ENCODE measurements at regions of chr17 and their contacts with region 1.

Region 1: GRCh38 chr17:37392024-37392590 is 14.5 kb downstream of the ACACA start:
- DNase-seq: no peak
- H3K4me3 Mint-ChIP-seq: no peak overlapping the region
- H3K27ac Mint-ChIP-seq: peak overlapping the region; percentile 18
- H3K4me1 Mint-ChIP-seq: peaks cover 17% of the 10 kb centered on the region
- H3K27me3 Mint-ChIP-seq: no peaks in the 10 kb centered on the region

Region 2: DNA sequence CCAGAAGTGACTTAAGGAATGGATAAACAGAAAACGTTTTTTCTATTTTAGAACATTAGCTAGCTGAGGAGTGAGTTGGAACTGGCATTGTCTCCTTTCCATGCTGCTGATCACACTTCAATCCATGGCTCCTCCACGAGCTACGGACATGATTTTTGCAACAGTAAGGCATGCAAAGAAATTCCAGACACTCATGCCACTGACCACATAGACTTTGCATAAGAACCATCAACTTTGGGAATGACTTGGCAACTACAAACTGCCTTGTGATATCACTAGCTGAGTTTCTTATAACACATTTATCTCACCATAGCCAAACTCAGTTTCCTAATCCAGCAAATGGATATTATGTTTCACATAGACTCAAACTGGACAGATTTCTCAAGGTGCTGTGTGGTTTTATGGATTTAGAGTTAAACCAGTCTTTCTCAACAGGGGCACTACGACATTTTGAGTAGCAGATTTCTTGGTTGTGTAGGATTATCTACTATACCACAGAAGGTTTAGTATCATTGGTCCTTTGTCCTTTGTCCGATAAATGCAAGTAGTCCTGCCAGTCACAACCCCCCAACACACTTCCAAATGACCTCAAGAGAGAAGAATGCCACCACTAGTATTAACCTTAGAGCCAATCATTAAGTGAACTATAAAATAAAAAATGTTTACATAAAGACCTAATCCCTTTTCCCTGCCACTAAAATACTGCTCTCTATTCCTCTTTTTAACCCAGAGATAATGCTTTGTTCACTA is 64.6 kb before region 1 on chr17:
- intact Hi-C with region 1: no loop called
- DNase-seq: no peak
- H3K4me3 Mint-ChIP-seq: no peak overlapping the region
- H3K27ac Mint-ChIP-seq: no peak overlapping the region
- H3K4me1 Mint-ChIP-seq: no peaks in the 10 kb centered on the region
- H3K27me3 Mint-ChIP-seq: no peaks in the 10 kb centered on the region

Region 3: DNA sequence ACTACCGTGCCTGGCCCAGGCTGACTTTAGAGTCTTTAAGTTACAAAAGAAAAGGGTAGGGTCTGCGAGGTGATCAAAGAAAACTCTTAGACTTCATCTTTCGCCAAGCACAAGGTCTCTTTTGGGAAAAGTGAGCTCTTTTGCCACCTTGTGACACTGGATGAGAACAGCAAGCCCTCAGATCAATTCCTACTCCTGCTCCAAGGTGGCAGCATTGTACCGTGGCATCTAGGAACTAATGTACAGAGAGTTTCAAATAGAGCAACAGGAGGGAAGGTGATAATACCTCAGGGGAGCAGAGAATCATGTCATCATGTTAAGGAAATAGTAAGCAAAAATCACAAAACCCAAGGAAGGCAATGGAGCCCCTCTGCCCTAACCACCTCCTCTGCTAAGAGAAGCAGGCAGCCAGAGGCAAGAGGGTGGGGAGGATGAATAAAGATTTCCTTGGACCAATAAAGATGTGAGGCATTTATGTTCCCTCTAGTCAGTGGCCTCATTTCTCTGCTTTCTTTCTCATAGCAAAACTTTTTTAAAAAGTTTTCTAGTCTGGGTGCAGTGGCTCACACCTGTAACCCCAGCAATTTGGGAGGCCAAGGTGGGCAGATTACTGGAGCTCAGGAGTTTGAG is 18.5 kb before region 1 on chr17:
- intact Hi-C with region 1: loop called (anchors 1 kb)
- DNase-seq: peak; percentile 91
- H3K4me3 Mint-ChIP-seq: no peak overlapping the region
- H3K27ac Mint-ChIP-seq: peak overlapping the region; percentile 13
- H3K4me1 Mint-ChIP-seq: peaks cover 6% of the 10 kb centered on the region
- H3K27me3 Mint-ChIP-seq: peaks cover 2% of the 10 kb centered on the region